ENCODE measurements at regions of chr13 and their contacts with region 1.

Region 1: GRCh38 chr13:97432917-97433726 is 847 bp upstream of the RAP2A start:
- DNase-seq: peak; percentile 99
- H3K4me3 Mint-ChIP-seq: peak overlapping the region; percentile 99
- H3K27ac Mint-ChIP-seq: peak overlapping the region; percentile 100
- H3K4me1 Mint-ChIP-seq: peaks cover 29% of the 10 kb centered on the region
- H3K27me3 Mint-ChIP-seq: peaks cover 4% of the 10 kb centered on the region

Region 2: GRCh38 chr13:97221989-97222700 is 211.0 kb before region 1 on chr13 and contains the start of gene MBNL2:
- CTCF ChIA-PET with region 1: interaction called, 5 read pairs
- POLR2A ChIA-PET with region 1: interaction called, 93 read pairs
- DNase-seq: peak; percentile 89
- H3K4me3 Mint-ChIP-seq: peak within 1 kb of the TSS; percentile 78
- H3K27ac Mint-ChIP-seq: peak within 1 kb of the TSS; percentile 76
- H3K4me1 Mint-ChIP-seq: peaks cover 42% of the 10 kb centered on the region
- H3K27me3 Mint-ChIP-seq: no peaks in the 10 kb centered on the region
- total RNA-seq, gene MBNL2: 18.0 to 18.8 TPM

Region 3: DNA sequence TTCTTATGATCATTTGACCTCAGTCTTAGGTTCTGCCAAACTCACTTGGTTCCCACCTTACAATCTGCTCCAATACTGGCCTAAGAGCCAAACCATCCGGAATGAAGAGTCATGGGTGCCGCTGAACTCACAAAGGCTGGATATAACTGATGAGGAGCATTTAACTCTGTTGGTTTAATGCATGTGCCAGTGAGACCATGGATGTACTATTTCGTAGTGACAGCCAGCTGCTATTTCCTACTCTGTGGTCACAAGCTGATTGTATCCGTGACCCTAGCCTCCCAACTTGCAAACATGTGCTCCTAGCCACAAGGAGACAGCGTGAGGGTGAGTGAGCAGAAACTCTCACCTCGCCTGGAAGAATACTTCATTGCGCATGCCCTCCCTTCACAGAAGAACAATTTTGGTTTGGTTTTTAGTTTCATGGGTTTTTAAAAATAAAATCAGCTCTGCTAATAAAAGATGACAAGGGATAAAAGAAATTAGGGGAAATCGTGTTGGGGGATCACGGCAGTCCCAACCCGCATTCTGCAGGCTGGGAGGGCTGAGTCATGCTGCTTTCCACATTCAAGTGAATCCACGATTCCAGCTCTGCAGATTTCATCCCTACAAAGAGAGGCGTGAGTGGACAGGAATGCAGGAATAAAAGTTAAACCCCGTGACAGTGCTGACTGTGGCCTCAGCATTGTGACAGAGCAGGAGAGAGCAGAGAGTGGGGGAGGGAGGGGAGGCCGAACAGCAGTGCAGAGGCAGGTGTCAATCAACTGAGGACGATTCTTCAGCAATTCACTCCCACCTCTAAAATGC is 65.9 kb before region 1 on chr13:
- CTCF ChIA-PET with region 1: interaction called, 7 read pairs
- POLR2A ChIA-PET with region 1: interaction called, 31 read pairs
- DNase-seq: no peak
- H3K4me3 Mint-ChIP-seq: no peak overlapping the region
- H3K27ac Mint-ChIP-seq: no peak overlapping the region
- H3K4me1 Mint-ChIP-seq: peaks cover 18% of the 10 kb centered on the region
- H3K27me3 Mint-ChIP-seq: no peaks in the 10 kb centered on the region

Region 4: DNA sequence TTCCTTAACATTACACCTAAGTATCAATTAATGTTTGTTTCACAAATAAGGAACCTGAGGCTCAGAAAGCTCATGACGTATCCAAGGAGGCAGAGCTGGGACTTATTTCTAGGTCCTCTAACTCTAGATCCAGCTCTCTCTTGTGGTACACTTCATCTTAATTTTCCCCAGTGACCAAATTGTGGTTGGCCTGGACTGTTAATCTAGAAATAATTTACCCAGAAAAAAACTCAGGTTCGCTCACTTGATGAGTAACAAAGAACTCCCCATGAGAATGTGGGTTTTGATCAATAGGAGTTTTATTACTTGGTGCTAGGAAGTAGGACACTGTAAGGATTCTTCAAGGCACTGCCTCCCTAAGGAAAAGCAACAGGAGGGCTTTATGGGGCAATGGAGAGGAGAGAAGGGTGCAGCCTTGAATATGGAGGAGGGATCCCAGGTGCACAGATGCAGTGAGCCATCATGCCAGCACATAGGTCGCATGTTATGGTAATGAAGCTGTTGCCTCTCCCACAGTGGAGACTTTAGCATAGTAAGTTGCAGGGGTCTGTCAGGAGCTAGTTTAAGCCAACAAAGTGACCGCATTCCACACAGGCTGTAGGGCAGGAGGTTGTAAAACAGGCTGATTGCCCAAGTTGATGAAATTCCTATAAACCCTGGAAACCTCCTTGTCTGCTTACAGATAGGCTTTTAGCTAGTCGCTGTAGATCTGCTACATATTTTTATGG is 15.5 kb after region 1 on chr13:
- CTCF ChIA-PET with region 1: interaction called, 3 read pairs
- POLR2A ChIA-PET with region 1: interaction called, 16 read pairs
- DNase-seq: no peak
- H3K4me3 Mint-ChIP-seq: no peak overlapping the region
- H3K27ac Mint-ChIP-seq: no peak overlapping the region
- H3K4me1 Mint-ChIP-seq: no peaks in the 10 kb centered on the region
- H3K27me3 Mint-ChIP-seq: no peaks in the 10 kb centered on the region

Region 5: DNA sequence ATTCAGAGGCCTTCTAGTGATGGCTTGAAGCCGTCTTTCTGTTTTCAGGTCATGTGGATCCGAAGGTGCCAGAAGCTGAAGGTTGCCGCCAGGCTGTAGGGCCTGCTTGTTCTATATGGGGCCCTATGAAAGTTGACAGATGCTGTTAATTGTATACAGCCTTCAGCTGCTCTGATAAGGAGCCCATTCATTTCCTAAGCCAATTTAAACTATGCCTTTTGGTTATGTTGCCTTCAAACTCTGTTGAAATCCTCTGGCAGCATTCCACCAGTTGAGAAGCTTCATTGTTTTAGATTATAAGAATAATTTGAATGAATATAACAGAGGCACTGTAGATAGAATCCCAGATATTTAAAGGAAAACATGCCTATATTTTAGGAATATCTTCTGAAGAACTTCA is 35.2 kb after region 1 on chr13:
- CTCF ChIA-PET with region 1: no interaction called
- POLR2A ChIA-PET with region 1: interaction called, 10 read pairs
- DNase-seq: no peak
- H3K4me3 Mint-ChIP-seq: no peak overlapping the region
- H3K27ac Mint-ChIP-seq: no peak overlapping the region
- H3K4me1 Mint-ChIP-seq: no peaks in the 10 kb centered on the region
- H3K27me3 Mint-ChIP-seq: peaks cover 2% of the 10 kb centered on the region

Measured in activated CD4-positive, alpha-beta memory T cell treated with anti-CD3 and anti-CD28 coated beads, Interleukin-2, amount 10 ng/mL, durations not matched to agents 7 days and 5 days (primary cell).